PC-9 (cell line): ENCODE measurements at regions of chr11 and their contacts with region 1.

Region 1: DNA sequence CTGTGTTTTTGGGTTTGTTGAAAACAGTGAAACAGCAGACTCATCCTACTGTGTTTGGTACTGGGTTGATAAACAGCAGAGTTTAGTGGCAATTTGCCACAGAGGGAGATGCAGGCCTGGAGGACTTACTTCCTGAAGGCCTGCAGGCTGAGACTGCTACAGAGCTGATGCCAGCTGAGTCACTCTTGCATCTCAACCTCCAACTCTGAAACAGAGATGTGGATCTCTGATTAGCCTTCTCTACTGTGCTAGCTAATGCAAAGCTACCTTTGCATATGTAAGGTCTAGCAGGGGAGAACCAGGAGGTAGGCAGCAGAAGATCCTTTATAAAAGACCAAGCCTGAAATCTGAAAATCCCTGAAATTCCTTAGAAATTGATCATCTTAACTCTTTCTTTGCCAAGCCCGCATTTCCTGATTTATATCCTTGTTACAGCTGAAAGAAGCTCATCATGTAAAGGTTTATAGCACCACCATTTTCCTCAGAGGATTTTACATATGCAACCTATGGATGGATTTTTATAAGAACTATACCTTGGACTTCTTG is 14.4 kb downstream of the ATP5MG start:
- DNase-seq: peak; percentile 71 to 97
- H3K4me3 ChIP-seq: no peak overlapping the region
- H3K27ac ChIP-seq: peak overlapping the region; percentile 47
- H3K4me1 ChIP-seq: peaks cover 32% of the 10 kb centered on the region
- H3K27me3 ChIP-seq: no peaks in the 10 kb centered on the region
- CTCF ChIP-seq: no peak

Region 2: DNA sequence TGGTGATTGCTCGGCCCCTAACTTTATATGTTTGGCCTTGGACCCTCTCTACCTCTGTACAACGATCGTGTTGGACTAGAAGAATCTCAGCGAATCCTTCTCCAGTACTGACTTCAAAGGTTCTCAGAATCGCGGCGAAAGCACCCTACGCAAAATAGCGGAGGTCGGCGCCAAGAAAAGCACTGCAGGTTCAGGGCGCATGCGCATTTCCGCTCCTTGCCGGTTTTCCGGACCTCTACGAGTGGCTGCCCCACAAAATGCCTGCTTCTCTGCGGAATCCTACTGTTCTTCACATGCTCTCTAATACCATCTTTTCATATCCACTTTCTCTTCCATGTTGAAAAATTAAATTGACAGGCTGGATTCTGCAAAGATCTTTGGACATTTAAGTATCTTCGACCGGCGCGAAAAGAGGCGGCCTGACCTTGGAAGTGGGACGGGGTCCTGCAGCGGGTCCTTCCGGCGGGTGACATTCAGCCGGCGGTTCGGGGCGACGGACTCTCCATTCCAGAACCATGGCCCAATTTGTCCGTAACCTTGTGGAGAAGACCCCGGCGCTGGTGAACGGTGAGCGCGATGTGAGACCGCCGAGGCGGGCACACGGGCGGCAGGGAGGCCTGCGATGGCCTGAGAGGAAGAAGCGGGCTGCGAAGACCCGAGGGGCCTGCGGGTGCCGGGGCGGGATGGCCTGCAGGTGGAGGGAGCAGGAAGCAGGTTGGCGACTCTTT is 14.5 kb before region 1 on chr11 and contains the start of gene ATP5MG:
- CTCF ChIA-PET with region 1: no interaction called
- POLR2A ChIA-PET with region 1: no interaction called
- intact Hi-C with region 1: loop called (anchors 1 kb)
- DNase-seq: peak; percentile 81 to 82
- H3K4me3 ChIP-seq: peak within 1 kb of the TSS; percentile 83
- H3K27ac ChIP-seq: peak within 1 kb of the TSS; percentile 45
- H3K4me1 ChIP-seq: peaks cover 21% of the 10 kb centered on the region
- H3K27me3 ChIP-seq: no peaks in the 10 kb centered on the region
- CTCF ChIP-seq: no peak
- total RNA-seq, gene ATP5MG: 240 and 248 TPM in 2 replicates